PC-3 (cell line): ENCODE measurements at regions of chr9 and their contacts with region 1.

Region 1: DNA sequence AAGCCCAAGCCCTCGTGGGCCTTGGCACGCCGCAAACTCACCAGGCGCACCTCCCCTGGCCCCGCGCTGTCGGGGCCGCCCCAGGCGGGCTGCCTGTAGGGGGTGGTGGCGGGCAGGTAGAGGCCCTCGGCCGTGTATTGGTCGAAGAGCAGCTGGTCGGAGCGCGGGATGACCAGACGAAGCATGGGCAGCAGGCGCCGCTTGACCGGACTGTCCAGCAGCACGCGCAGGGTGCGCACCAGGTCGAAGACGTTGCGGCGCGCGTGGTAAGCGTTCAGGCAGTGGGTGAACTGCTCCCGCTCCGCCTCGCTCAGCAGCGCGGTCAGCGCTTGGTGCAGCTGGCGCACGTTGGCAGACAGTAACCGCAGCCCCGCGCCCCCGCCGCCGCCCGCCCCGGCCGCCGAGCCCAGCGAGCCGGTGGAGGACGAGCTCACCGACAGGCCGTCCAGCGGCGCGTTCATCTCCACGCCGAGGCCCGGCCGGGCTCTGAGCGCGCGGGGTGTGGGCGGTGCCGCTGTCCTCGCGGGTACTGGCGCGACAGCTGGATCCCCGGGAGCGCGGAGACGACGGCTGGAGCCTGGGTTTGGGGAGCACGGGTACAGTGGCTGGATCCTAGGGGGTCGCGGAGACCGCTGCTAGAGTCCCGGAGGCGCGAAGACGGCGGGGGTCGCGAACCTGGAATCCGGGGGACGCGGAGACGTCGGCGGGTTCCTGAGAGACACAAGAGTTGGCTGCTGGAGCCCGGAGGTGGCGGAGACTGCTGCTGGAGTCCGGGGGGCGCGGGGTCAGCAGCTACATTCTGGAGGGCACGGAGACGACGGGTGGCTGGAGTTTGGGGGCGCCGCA is 709 bp downstream of the WHRN start:
- DNase-seq: peak; percentile 58
- ATAC-seq: peak; percentile 62
- H3K4me3 ChIP-seq: peak overlapping the region; percentile 90
- H3K27ac ChIP-seq: peak overlapping the region; percentile 17; the same call in 1 of the 2 replicates
- H3K4me1 ChIP-seq: peaks cover 22% of the 10 kb centered on the region
- H3K27me3 ChIP-seq: no peaks in the 10 kb centered on the region
- CTCF ChIP-seq: peak; percentile 70

Region 2: DNA sequence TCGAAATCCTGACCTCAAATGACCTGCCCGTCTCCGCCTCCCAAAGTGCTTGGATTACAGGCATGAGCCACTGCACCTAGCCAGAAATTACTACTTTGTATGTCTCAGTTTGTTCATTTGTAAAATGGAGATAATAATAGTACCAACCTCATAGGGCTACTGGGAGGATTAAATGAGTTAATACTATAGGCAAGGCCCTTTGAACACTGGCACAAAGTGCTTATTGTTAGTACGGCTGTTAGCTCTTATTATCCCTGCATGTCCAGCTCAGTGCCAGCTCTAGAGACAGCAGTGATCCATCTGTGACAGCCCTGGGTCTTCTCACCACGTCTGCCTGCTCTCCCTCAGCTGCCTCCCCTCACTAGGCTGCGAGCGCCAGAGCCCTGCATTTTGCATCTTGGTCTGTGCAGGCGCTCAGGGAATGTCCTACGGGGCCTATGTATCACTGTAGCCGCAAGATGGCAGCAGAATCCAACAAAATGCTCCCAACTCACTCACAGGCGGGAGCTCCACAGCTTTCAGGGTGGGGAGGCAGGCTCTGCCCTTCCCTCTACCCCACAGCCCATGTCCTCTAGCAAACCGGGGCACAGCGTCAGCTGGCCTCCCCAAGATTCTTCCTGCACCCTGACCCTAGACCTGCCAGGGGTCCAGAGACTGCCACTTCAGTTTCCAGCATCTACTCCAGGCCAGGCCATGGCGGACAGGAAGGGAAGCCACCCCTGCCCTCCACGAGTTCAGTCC is 99.1 kb before region 1 on chr9:
- CTCF ChIA-PET with region 1: interaction called, 4 read pairs
- POLR2A ChIA-PET with region 1: no interaction called
- intact Hi-C with region 1: loop called (anchors 1 kb)
- DNase-seq: peak; percentile 73
- ATAC-seq: peak; percentile 84
- H3K4me3 ChIP-seq: no peak overlapping the region
- H3K27ac ChIP-seq: no peak overlapping the region
- H3K4me1 ChIP-seq: no peaks in the 10 kb centered on the region
- H3K27me3 ChIP-seq: no peaks in the 10 kb centered on the region
- CTCF ChIP-seq: peak; percentile 77

Region 3: GRCh38 chr9:114428466-114428865 is 76.1 kb before region 1 on chr9:
- CTCF ChIA-PET with region 1: no interaction called
- POLR2A ChIA-PET with region 1: no interaction called
- intact Hi-C with region 1: no loop called
- DNase-seq: no peak
- ATAC-seq: no peak
- H3K4me3 ChIP-seq: no peak overlapping the region
- H3K27ac ChIP-seq: no peak overlapping the region
- H3K4me1 ChIP-seq: peaks cover 4% of the 10 kb centered on the region; the same call in 1 of the 2 replicates
- H3K27me3 ChIP-seq: no peaks in the 10 kb centered on the region
- CTCF ChIP-seq: no peak

Region 4: GRCh38 chr9:114472765-114473446 is 31.7 kb before region 1 on chr9:
- CTCF ChIA-PET with region 1: no interaction called
- POLR2A ChIA-PET with region 1: no interaction called
- intact Hi-C with region 1: no loop called
- DNase-seq: no peak
- ATAC-seq: no peak
- H3K4me3 ChIP-seq: no peak overlapping the region
- H3K27ac ChIP-seq: no peak overlapping the region
- H3K4me1 ChIP-seq: no peaks in the 10 kb centered on the region
- H3K27me3 ChIP-seq: no peaks in the 10 kb centered on the region
- CTCF ChIP-seq: no peak

Region 5: GRCh38 chr9:114487607-114488300 is 16.8 kb before region 1 on chr9:
- CTCF ChIA-PET with region 1: no interaction called
- POLR2A ChIA-PET with region 1: no interaction called
- intact Hi-C with region 1: loop called (anchors 1 kb)
- DNase-seq: peak; percentile 82
- ATAC-seq: peak; percentile 90
- H3K4me3 ChIP-seq: no peak overlapping the region
- H3K27ac ChIP-seq: no peak overlapping the region
- H3K4me1 ChIP-seq: peaks cover 9% of the 10 kb centered on the region
- H3K27me3 ChIP-seq: no peaks in the 10 kb centered on the region
- CTCF ChIP-seq: peak; percentile 84

Region 6: DNA sequence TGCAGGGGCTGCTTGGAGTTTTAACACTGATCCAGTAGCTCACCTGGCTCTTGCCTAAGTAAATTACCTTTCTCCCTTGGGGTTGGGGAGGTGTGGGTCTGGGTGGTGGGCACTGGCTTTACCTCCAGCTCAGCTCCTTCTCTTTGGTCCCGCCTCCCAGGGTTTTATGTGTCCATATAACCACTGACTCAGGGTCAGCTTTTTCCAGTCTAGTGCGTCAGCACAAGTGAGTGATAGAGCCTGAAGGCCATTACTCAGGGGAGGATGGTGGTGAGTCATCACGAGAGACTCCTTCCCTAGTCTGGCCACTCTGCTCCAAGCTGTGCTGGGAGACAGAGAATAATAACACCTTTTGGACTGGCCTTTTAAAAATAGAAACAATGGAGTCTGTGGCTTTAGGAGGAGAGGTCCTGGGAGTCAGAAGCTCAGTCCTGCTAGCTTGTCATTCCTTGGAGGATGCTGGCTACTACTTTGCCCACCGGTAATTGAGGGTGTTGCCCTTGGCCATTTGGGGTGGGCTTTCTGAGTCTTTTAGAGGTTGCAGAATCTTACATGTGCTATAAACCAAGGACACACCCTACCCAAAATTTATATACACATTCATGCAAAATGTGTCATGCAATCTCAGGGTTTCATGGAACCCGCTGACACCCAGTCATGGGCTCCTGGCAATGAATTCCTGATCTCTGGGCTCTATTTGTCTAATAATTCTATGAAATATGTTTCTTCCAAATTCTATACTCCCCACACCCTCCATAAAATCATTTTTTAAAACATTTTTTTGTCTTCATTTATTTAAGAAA is 47.5 kb after region 1 on chr9:
- CTCF ChIA-PET with region 1: interaction called, 4 read pairs
- POLR2A ChIA-PET with region 1: interaction called, 3 read pairs
- intact Hi-C with region 1: loop called (anchors 1 kb)
- DNase-seq: peak; percentile 98
- ATAC-seq: peak; percentile 96
- H3K4me3 ChIP-seq: peak overlapping the region; percentile 45
- H3K27ac ChIP-seq: peak overlapping the region; percentile 99
- H3K4me1 ChIP-seq: peaks cover 22% of the 10 kb centered on the region
- H3K27me3 ChIP-seq: no peaks in the 10 kb centered on the region
- CTCF ChIP-seq: no peak

Region 7: DNA sequence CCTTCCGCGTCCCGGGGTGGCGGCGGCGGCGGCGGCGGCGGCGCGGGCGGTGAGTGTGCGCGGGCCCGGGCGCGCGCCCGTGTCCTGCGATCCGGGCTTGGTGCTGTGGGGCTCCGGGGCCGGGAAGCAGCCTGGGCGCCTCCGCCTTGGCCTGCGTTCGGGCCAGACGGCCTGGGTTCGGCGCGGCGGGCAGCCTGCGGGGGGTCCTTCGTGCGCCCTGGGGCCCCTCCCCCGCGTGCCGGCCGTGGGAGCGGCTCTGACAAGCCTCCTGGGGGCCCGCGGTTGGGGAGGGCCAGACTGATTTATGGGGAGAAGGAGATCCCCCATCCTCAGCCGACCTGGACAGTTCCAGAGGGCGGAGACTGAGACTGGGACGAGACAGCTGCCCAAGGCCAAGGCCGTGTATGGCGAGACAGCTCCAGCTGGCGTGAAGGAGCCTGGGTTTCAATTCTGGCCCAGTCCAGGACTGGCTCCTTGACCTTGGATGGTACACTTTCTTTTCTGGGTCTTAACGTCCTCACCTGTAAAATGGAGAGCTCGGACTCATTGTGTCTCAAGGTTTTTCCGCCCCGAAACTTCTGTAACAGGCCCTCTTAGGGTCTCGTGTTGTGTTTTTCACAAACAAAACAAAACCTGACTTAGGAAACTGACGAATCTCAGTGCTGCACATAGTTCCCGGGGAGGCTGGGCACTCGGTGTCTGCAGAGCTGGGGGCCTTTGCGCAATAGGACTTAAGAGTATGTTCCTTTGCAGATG is 107.1 kb after region 1 on chr9:
- CTCF ChIA-PET with region 1: no interaction called
- POLR2A ChIA-PET with region 1: interaction called, 12 read pairs
- intact Hi-C with region 1: no loop called
- DNase-seq: peak; percentile 34
- ATAC-seq: peak; percentile 79
- H3K4me3 ChIP-seq: peak overlapping the region; percentile 87
- H3K27ac ChIP-seq: peak overlapping the region; percentile 56
- H3K4me1 ChIP-seq: peaks cover 22% of the 10 kb centered on the region; the same call in 1 of the 2 replicates
- H3K27me3 ChIP-seq: no peaks in the 10 kb centered on the region
- CTCF ChIP-seq: no peak